H1 (cell line): ENCODE measurements at regions of chr14 and their contacts with region 1.

Region 1: DNA sequence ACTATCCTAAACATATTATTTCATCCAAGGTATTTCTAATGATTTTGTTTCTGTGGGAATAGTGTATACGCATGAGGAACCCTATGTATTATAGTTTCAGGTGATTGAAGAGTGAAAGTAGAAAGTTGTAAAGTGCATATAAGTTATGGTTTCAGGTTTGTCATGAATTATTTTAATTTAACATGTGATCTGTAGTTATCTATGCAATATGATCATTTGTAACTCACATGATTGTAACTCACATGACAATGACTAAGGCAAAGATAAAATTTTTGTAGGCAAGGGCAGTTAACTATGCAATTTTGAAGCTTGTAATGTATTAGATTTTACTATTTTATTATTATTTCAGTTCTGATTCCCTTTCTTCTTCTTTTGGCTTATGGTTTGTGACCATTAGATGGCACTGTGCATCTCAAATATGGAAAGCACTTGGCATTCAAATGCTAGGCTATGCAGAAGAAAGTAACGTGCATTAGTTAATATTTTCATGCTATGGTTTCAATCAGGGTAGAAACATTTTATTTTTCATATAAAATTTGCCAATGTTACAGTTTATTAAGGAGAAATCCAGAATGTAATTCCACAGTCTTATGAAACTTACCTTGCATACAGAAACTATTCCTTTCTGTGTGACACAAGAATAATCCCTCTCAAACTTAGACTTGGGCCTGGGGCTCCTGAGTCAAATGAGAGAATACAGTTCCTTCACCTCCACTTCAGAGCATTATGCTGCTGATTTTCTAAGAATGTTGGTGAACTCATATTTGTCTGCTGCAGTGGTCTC is 15.8 kb upstream of the TMEM30B start:
- DNase-seq: no peak
- H3K4me3 ChIP-seq: no peak overlapping the region
- H3K27ac ChIP-seq: no peak overlapping the region
- H3K4me1 ChIP-seq: peaks cover 0 to 9% (median 0%) of the 10 kb centered on the region in 4 experiments; a peak in 2 of 7 replicates
- H3K27me3 ChIP-seq: no peaks in the 10 kb centered on the region
- CTCF ChIP-seq: peak in 1 of 3 experiments; percentile 49; a peak in 1 of 4 replicates
- EP300 ChIP-seq: no peak
- POLR2A ChIP-seq: no peak
- RAD21 ChIP-seq: peak; percentile 63 to 70

Region 2: GRCh38 chr14:61076556-61076955 is 220.4 kb before region 1 on chr14:
- CTCF ChIA-PET with region 1: no interaction called
- POLR2A ChIA-PET with region 1: no interaction called
- DNase-seq: no peak
- H3K4me3 ChIP-seq: no peak overlapping the region
- H3K27ac ChIP-seq: no peak overlapping the region
- H3K4me1 ChIP-seq: peaks cover 4 to 8% (median 7%) of the 10 kb centered on the region in 4 experiments
- H3K27me3 ChIP-seq: no peaks in the 10 kb centered on the region
- CTCF ChIP-seq: no peak
- EP300 ChIP-seq: no peak
- POLR2A ChIP-seq: no peak
- RAD21 ChIP-seq: no peak

Region 3: GRCh38 chr14:61160798-61161197 is 136.1 kb before region 1 on chr14:
- CTCF ChIA-PET with region 1: no interaction called
- POLR2A ChIA-PET with region 1: no interaction called
- DNase-seq: no peak
- H3K4me3 ChIP-seq: no peak overlapping the region
- H3K27ac ChIP-seq: no peak overlapping the region
- H3K4me1 ChIP-seq: no peaks in the 10 kb centered on the region
- H3K27me3 ChIP-seq: no peaks in the 10 kb centered on the region
- CTCF ChIP-seq: no peak
- EP300 ChIP-seq: no peak
- POLR2A ChIP-seq: no peak
- RAD21 ChIP-seq: no peak

Region 4: GRCh38 chr14:61244009-61244408 is 52.9 kb before region 1 on chr14:
- CTCF ChIA-PET with region 1: no interaction called
- POLR2A ChIA-PET with region 1: no interaction called
- DNase-seq: no peak
- H3K4me3 ChIP-seq: no peak overlapping the region
- H3K27ac ChIP-seq: no peak overlapping the region
- H3K4me1 ChIP-seq: peaks cover 0 to 9% (median 1%) of the 10 kb centered on the region in 4 experiments; a peak in 3 of 7 replicates
- H3K27me3 ChIP-seq: no peaks in the 10 kb centered on the region
- CTCF ChIP-seq: no peak; a peak in 1 of 4 replicates
- EP300 ChIP-seq: no peak
- POLR2A ChIP-seq: no peak
- RAD21 ChIP-seq: no peak

Region 5: GRCh38 chr14:61456720-61457119 is 159.8 kb after region 1 on chr14:
- CTCF ChIA-PET with region 1: interaction called, 11 read pairs
- POLR2A ChIA-PET with region 1: no interaction called
- DNase-seq: peak in 1 of 2 experiments; percentile 85
- H3K4me3 ChIP-seq: no peak overlapping the region
- H3K27ac ChIP-seq: no peak overlapping the region
- H3K4me1 ChIP-seq: no peaks in the 10 kb centered on the region
- H3K27me3 ChIP-seq: no peaks in the 10 kb centered on the region
- CTCF ChIP-seq: peak; percentile 57 to 82 (median 71)
- EP300 ChIP-seq: no peak
- POLR2A ChIP-seq: no peak
- RAD21 ChIP-seq: peak; percentile 79 to 84